Heart right ventricle (tissue), 16 donors: ENCODE measurements at regions of chr9 and their contacts with region 1.

Region 1: DNA sequence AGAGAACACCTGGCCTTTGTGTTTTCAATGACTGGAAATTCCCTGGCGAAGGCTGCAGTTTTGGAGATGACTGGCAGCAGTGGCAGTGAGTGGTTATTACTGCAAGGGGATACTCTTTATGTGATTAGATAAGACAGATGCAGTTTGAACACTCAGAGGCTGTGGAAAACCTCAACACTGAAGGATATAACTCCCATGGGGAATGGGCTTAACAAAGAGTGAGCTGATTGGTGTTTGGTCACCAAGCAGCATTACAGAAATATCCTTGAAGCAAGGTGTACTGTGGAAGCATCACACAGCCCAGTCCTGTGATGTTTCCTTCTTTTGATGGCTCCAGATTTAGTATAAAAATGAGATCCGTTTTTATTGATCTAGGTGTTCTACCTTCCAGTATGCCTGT is 490.7 kb upstream of the PTPRD start:
- DNase-seq: no peak
- ATAC-seq: no peak
- H3K4me3 ChIP-seq: no peak overlapping the region
- H3K27ac ChIP-seq: no peak overlapping the region
- H3K4me1 ChIP-seq: no peaks in the 10 kb centered on the region
- H3K27me3 ChIP-seq: no peaks in the 10 kb centered on the region
- CTCF ChIP-seq: no peak

Region 2: GRCh38 chr9:11086561-11086960 is 17.0 kb before region 1 on chr9:
- intact Hi-C with region 1: loop called in 1 of 10 experiments (anchors 2 kb)
- DNase-seq: no peak
- ATAC-seq: no peak
- H3K4me3 ChIP-seq: no peak overlapping the region
- H3K27ac ChIP-seq: no peak overlapping the region
- H3K4me1 ChIP-seq: no peaks in the 10 kb centered on the region
- H3K27me3 ChIP-seq: no peaks in the 10 kb centered on the region
- CTCF ChIP-seq: no peak

Region 3: DNA sequence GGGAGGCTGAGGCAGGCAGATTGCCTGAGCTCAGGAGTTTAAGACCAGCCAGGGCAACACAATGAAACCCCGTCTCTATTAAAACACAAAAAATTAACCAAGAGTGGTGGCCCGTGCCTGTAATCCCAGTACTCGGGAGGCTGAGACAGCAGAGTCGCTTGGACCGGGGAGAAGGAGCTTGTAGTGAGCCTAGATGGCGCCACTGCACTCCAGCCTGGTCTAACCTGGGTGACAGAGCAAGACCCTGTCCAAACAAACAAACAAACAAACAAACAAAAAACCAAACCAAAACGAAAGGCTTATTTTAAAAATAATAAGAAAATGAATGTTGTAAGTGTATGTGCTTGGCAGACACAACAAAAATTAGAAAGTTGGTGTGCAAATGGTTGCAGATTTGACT is 45.5 kb after region 1 on chr9:
- intact Hi-C with region 1: no loop called
- DNase-seq: no peak
- ATAC-seq: no peak
- H3K4me3 ChIP-seq: no peak overlapping the region
- H3K27ac ChIP-seq: no peak overlapping the region
- H3K4me1 ChIP-seq: no peaks in the 10 kb centered on the region
- H3K27me3 ChIP-seq: no peaks in the 10 kb centered on the region
- CTCF ChIP-seq: no peak

Region 4: DNA sequence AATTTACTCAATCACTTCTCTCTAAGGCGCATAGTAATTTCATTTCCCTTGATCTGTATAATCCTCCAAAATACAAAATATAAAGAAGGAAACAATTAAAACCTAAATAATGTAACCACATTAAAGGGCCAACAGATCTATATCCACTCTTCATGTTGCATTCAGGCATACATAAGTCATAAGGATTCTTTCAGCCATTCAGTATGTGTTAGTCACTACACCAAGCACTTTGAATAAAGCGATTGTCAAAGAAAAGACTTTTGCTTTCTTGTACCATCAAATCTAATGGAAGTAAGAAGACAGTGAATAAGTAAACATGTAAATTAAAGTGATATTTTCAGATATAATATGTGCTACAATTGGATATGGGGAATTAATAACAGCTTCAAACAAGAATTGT is 78.5 kb after region 1 on chr9:
- intact Hi-C with region 1: no loop called
- DNase-seq: no peak
- ATAC-seq: no peak
- H3K4me3 ChIP-seq: no peak overlapping the region
- H3K27ac ChIP-seq: no peak overlapping the region
- H3K4me1 ChIP-seq: no peaks in the 10 kb centered on the region
- H3K27me3 ChIP-seq: no peaks in the 10 kb centered on the region
- CTCF ChIP-seq: no peak